PC-9 (cell line): ENCODE measurements at regions of chr6 and their contacts with region 1.

Region 1: GRCh38 chr6:37303932-37304363 is 46.0 kb upstream of the TMEM217 start:
- DNase-seq: peak in 1 of 2 experiments; percentile 32
- H3K4me3 ChIP-seq: no peak overlapping the region
- H3K27ac ChIP-seq: no peak overlapping the region
- H3K4me1 ChIP-seq: no peaks in the 10 kb centered on the region
- H3K27me3 ChIP-seq: no peaks in the 10 kb centered on the region
- CTCF ChIP-seq: peak; percentile 64

Region 2: DNA sequence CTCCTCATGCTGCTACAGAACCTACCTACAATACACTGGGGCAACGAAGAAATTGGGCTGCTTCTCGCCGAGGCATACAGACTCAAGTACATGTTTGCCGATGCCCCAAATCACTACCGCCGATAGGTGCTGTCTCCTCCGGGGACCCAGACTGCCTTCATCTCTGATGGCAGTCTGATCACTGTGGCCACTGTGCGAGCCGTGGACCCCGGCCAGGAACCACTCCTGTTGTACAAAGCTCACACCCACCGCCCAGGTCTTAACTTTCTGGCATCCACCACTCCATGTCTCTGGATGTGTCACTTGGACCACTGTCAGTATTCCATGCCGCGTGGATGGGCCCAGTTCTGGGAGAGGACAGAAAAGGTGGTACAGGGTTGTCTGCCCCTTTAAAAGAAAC is 27.1 kb after region 1 on chr6:
- CTCF ChIA-PET with region 1: no interaction called
- POLR2A ChIA-PET with region 1: no interaction called
- intact Hi-C with region 1: no loop called
- DNase-seq: no peak
- H3K4me3 ChIP-seq: no peak overlapping the region
- H3K27ac ChIP-seq: no peak overlapping the region
- H3K4me1 ChIP-seq: no peaks in the 10 kb centered on the region
- H3K27me3 ChIP-seq: no peaks in the 10 kb centered on the region
- CTCF ChIP-seq: no peak

Region 3: GRCh38 chr6:37432916-37433656 is 129.1 kb after region 1 on chr6 and contains the start of gene CMTR1:
- CTCF ChIA-PET with region 1: no interaction called
- POLR2A ChIA-PET with region 1: no interaction called
- intact Hi-C with region 1: no loop called
- DNase-seq: peak; percentile 70 to 92
- H3K4me3 ChIP-seq: peak within 1 kb of the TSS; percentile 87
- H3K27ac ChIP-seq: 0 out of 2 replicates have a peak within 1 kb of the TSS, but pooled peaks have one; percentile 13
- H3K4me1 ChIP-seq: peaks cover 14% of the 10 kb centered on the region
- H3K27me3 ChIP-seq: no peaks in the 10 kb centered on the region
- CTCF ChIP-seq: no peak
- total RNA-seq, gene CMTR1: 28.3 and 37.0 TPM in 2 replicates

Region 4: GRCh38 chr6:37587866-37588734 is 284.2 kb after region 1 on chr6:
- CTCF ChIA-PET with region 1: no interaction called
- POLR2A ChIA-PET with region 1: no interaction called
- intact Hi-C with region 1: no loop called
- DNase-seq: no peak
- H3K4me3 ChIP-seq: no peak overlapping the region
- H3K27ac ChIP-seq: no peak overlapping the region
- H3K4me1 ChIP-seq: peaks cover under 1% of the 10 kb centered on the region; the same call in 1 of the 2 replicates
- H3K27me3 ChIP-seq: no peaks in the 10 kb centered on the region
- CTCF ChIP-seq: no peak

Region 5: GRCh38 chr6:38639498-38640215 is 1335.7 kb after region 1 on chr6 and contains the start of gene BTBD9:
- CTCF ChIA-PET with region 1: no interaction called
- POLR2A ChIA-PET with region 1: interaction called, 10 read pairs
- intact Hi-C with region 1: no loop called
- DNase-seq: peak; percentile 58 to 83
- H3K4me3 ChIP-seq: peak within 1 kb of the TSS; percentile 93
- H3K27ac ChIP-seq: peak within 1 kb of the TSS; percentile 28
- H3K4me1 ChIP-seq: peaks cover 17% of the 10 kb centered on the region
- H3K27me3 ChIP-seq: no peaks in the 10 kb centered on the region
- CTCF ChIP-seq: no peak
- total RNA-seq, gene BTBD9: 9.0 and 10.8 TPM in 2 replicates